Sigmoid colon (tissue), 7 donors: ENCODE measurements at regions of chr17 and their contacts with region 1.

Region 1: DNA sequence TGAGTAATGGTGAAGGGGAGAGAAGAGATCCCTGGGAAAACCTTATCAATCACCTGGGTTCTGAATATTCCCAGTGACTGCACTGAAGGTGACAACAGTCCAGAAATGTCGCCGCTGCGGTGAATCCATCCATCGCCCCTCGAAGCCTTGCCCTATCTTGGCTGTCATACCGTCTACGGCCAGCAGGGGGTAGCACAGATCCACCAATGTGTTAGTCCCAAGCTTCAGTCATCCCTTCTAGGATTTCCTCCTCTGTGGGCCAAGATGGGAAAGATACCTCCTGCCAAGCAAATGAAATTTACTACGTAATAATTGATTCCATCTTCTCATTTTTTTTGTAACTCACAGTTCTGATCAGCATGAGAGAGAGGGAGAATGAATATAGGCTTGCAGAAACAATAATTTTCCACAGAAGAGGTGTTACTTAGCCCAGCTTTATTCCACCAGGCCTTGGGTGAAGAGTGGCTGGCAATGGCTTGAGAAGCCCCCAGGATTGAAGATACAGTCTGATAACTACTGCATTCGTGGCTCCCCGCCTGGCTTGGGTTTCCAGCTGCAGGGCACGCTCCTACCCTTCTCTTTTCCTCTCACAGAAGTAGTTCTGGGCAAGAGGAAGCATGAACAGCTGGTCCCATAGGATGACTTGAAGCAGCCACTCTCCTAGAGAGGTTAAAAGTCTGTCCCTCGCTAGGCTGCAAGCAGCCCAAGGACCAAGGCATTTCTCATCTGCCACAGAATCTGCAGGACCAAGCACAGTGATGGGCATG is 2.6 kb upstream of the FMNL1 start:
- DNase-seq: peak; percentile 90
- H3K4me3 ChIP-seq: no peak overlapping the region
- H3K27ac ChIP-seq: no peak overlapping the region
- H3K4me1 ChIP-seq: peaks cover 0 to 20% (median 14%) of the 10 kb centered on the region in 4 donors
- H3K27me3 ChIP-seq: peaks cover 7 to 31% (median 18%) of the 10 kb centered on the region in 3 donors
- CTCF ChIP-seq: peak; percentile 90 to 99 (median 96)
- EP300 ChIP-seq: no peak
- POLR2A ChIP-seq: no peak

Region 2: DNA sequence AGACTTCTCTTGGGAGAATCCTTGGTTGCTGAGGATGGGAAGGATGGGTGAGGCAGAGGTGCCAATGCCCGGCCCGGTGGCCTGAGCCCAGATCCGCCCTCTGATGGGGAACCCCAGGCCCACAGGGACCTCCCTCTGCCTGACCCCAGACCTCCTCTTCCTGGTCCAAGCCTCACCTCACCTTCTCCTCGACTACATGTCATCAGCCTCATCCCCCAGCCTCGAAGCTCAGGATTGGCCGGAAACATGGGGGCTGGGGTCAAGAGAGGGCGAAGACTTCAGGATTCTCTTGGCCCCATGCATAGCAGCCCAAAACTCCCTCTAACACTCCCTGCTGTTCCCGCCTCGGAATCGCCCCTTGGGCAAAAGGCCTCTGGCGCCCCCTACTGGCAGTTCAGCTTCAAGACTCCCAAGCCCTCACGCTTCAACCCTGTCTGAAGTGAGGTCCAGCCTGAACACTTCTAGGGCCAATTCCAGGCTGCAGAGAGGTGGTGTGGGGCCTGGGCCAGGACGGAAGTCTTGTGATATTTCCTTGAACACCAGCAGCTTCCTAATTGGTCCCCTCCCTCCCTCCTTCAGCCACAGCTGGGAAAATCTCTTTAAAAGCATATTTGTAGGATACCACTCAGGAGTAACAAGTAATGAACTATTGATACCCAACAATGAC is 166.4 kb after region 1 on chr17:
- intact Hi-C with region 1: loop called (anchors 1 kb)
- DNase-seq: peak; percentile 93
- H3K4me3 ChIP-seq: no peak overlapping the region
- H3K27ac ChIP-seq: no peak overlapping the region
- H3K4me1 ChIP-seq: peaks cover 0 to 6% (median 5%) of the 10 kb centered on the region in 4 donors
- H3K27me3 ChIP-seq: no peaks in the 10 kb centered on the region
- CTCF ChIP-seq: peak; percentile 96 to 98 (median 97)
- EP300 ChIP-seq: no peak
- POLR2A ChIP-seq: no peak